ENCODE measurements at regions of chr3 and their contacts with region 1.

Region 1: GRCh38 chr3:87350364-87351199 is 74.2 kb upstream of the POU1F1 start:
- DNase-seq: peak; percentile 23
- H3K4me3 ChIP-seq: no peak overlapping the region
- H3K27ac ChIP-seq: no peak overlapping the region
- H3K27me3 ChIP-seq: no peaks in the 10 kb centered on the region
- CTCF ChIP-seq: peak; percentile 90

Region 2: DNA sequence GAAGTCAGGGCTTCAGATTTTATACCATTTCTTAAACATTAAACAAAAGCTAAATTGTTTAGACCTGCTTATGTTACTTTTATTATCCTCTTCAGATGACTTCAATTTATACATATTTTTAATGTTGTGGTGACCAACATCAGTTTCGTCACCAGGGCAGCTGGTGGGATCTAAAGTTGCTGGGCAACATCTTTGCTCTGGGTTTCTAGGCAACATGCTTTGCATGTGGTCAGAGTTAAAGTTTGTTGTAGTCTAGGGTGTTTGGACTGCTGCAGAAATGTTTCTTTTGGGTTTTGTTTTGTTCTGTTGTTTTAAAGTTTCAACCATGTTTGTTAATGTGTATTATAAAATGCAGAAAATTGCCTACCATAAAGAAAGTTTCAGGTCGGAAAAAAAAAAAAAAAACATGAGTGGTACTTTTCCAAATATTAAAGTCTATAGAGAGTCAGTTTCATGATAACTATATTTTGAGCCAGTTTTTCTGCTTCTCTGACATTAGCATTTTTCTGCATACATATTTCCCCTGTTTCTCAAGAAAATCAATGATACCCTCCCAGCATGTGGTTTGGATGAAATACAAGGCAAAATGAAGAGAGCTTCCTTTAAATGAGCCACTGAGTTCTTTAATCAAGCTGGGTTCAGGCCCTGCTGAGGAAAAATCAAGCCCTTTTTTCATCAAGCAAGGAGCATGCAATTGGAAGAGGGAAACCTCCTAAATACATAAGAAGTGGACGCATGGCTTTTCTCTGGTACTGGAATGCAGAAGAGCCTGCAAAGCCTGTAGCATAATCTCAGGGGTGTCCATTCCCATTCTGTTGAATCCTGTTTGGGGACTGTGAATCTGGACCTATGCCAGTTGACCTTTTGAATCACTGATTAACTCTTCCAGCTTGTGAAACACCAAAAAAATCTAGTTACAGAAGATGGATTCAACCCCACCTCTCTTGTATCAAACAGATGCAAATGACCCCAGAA is 324.6 kb before region 1 on chr3:
- CTCF ChIA-PET with region 1: no interaction called
- POLR2A ChIA-PET with region 1: no interaction called
- DNase-seq: no peak
- H3K4me3 ChIP-seq: no peak overlapping the region
- H3K27ac ChIP-seq: no peak overlapping the region
- H3K27me3 ChIP-seq: no peaks in the 10 kb centered on the region
- CTCF ChIP-seq: no peak

Region 3: GRCh38 chr3:87298111-87298718 is 52.4 kb before region 1 on chr3:
- CTCF ChIA-PET with region 1: interaction called, 24 read pairs
- POLR2A ChIA-PET with region 1: no interaction called
- DNase-seq: peak; percentile 7
- H3K4me3 ChIP-seq: no peak overlapping the region
- H3K27ac ChIP-seq: no peak overlapping the region
- H3K27me3 ChIP-seq: no peaks in the 10 kb centered on the region
- CTCF ChIP-seq: peak; percentile 67

Region 4: DNA sequence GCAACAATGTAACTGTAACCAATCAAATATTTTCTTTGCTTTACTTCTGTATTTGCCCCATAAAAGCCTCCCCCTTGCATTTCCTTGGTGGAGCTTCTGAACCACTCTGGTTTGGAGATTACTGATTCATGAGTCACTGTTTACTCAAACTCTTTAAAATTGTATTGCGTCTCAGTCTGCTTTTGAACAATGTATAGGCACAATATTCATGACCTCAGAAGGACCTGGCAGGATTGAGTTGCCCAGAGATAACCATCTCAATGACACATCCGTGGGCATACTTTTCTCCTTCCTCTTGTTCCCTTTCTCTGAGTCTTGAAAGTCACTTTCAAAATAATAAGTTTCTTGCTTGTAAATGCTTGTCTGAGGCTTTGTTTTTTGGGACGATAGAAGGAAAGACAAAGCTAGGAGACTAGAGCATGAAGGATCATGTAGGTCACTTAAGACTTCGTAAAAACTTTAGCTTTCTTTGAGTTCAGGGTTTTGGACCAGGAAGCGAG is 17.1 kb before region 1 on chr3:
- CTCF ChIA-PET with region 1: interaction called, 89 read pairs
- POLR2A ChIA-PET with region 1: no interaction called
- DNase-seq: peak; percentile 41
- H3K4me3 ChIP-seq: no peak overlapping the region
- H3K27ac ChIP-seq: no peak overlapping the region
- H3K27me3 ChIP-seq: no peaks in the 10 kb centered on the region
- CTCF ChIP-seq: no peak

Region 5: DNA sequence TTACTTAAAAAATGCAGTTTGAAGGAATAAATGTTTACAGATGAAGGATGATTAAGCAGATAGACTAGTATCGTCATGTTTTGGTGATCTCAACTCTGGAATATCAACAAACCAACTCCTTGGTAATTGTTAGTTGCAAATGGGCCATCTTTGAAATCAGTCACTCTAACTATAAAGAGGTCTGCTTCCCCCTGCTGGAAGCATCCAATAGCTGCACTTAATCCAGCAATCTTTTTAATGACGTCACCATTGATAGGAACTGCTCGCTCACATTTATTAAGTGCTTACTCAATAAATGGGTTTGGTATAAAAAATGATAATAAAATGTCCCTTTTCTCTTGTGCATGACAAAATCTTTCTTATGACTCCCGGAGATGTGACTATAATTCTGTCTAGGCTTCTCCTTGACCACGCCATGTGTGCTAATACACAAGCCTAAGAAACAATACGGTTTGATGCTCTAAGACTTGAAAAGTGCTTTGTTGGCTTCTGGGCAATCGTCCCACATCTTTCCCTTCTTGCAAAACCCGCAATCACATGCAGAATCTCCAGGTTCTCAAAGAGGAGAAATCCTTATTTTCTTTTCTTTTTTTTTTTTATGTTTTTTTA is 153.4 kb after region 1 on chr3:
- CTCF ChIA-PET with region 1: interaction called, 23 read pairs
- POLR2A ChIA-PET with region 1: no interaction called
- DNase-seq: peak; percentile 15
- H3K4me3 ChIP-seq: no peak overlapping the region
- H3K27ac ChIP-seq: no peak overlapping the region
- H3K27me3 ChIP-seq: no peaks in the 10 kb centered on the region
- CTCF ChIP-seq: peak; percentile 67

Region 6: GRCh38 chr3:87696124-87697013 is 345.8 kb after region 1 on chr3:
- CTCF ChIA-PET with region 1: no interaction called
- POLR2A ChIA-PET with region 1: no interaction called
- DNase-seq: no peak
- H3K4me3 ChIP-seq: no peak overlapping the region
- H3K27ac ChIP-seq: no peak overlapping the region
- H3K27me3 ChIP-seq: no peaks in the 10 kb centered on the region
- CTCF ChIP-seq: no peak

Region 7: GRCh38 chr3:88113311-88114162 is 763.0 kb after region 1 on chr3:
- CTCF ChIA-PET with region 1: interaction called, 21 read pairs
- POLR2A ChIA-PET with region 1: no interaction called
- DNase-seq: peak; percentile 42
- H3K4me3 ChIP-seq: no peak overlapping the region
- H3K27ac ChIP-seq: no peak overlapping the region
- H3K27me3 ChIP-seq: no peaks in the 10 kb centered on the region
- CTCF ChIP-seq: peak; percentile 84

Measured in AG04450 (cell line).